PC-3 (cell line): ENCODE measurements at regions of chr12 and their contacts with region 1.

Region 1: DNA sequence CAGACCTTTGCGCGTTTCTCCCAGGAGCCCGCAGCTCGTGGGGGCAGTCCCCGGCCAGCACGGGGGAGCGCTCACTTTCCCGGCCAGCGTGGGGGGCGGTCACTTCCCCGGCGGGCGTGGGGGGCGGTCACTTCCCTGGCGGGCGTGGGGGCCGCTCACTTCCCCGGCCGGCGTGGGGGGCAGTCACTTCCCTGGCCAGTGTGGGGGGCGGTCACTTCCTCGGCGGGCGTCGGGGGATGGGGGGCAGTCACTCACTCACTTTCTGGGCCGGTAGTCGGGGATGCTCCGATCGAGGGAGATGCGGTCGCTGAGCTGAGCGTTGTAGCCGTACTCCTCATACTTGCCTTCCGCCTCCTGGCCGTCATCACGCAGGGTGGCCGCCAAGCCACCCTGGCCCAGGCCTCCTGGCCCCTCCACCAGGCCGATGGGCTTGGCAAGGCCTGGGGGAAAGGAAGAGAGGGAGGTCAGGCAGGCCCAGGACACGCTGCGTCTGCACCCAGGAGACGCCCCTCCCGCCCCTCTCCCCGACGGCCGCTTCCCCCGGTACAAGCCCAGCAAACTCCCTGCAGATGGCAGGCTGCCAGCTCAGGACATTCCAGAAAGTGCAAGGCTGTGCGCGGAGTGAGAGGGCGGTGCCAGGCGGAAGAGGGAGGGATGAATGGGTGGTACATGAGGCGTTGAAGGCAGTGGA is 43.3 kb downstream of the GALNT9 start:
- DNase-seq: peak; percentile 67
- ATAC-seq: no peak
- H3K4me3 ChIP-seq: no peak overlapping the region
- H3K27ac ChIP-seq: peak overlapping the region; percentile 70
- H3K4me1 ChIP-seq: peaks cover 58% of the 10 kb centered on the region
- H3K27me3 ChIP-seq: no peaks in the 10 kb centered on the region
- CTCF ChIP-seq: no peak

Region 2: DNA sequence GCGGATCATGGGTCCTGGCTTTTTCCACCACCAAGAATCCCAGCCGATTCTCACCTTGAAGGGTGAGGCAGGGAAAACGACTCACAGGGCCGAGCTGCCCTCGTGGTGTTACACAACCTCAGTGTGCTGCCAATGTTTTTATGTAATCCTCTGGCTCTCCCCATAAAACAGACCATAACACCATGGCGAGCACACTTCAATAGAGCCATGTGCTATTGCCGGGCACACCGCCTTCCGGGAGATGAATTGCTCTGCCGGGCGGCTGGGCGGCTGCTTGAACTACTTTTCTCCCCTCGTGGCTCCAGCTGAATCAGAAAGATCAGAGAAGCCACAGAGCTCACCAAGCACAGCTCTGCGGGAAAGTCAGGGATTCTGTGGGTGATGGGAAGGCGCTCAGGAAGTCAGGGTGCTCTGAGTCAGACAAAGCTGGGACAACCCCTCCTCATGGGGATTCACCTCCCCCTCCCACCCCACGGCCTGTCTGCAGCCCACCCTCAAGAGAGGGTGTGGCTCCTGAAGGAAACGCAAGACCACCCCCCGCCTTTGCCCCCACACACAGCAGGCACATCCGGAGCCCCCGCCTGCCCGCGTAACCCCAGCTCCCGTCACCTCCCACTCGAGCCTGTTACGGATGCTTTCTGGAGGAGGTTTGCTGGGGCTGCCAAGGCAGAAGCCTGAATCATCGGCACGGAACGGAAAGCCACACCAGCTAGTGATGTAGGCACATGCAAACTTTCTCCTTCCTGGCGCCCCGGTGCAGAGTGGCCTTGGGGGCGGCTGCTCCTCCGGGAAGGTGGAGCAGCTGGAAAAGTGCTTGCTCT is 41.4 kb after region 1 on chr12:
- CTCF ChIA-PET with region 1: interaction called, 4 read pairs
- POLR2A ChIA-PET with region 1: no interaction called
- intact Hi-C with region 1: loop called (anchors 5 kb)
- DNase-seq: peak; percentile 82
- ATAC-seq: peak; percentile 87
- H3K4me3 ChIP-seq: peak overlapping the region; percentile 57
- H3K27ac ChIP-seq: peak overlapping the region; percentile 66
- H3K4me1 ChIP-seq: peaks cover 19% of the 10 kb centered on the region
- H3K27me3 ChIP-seq: peaks cover 45% of the 10 kb centered on the region
- CTCF ChIP-seq: no peak

Region 3: DNA sequence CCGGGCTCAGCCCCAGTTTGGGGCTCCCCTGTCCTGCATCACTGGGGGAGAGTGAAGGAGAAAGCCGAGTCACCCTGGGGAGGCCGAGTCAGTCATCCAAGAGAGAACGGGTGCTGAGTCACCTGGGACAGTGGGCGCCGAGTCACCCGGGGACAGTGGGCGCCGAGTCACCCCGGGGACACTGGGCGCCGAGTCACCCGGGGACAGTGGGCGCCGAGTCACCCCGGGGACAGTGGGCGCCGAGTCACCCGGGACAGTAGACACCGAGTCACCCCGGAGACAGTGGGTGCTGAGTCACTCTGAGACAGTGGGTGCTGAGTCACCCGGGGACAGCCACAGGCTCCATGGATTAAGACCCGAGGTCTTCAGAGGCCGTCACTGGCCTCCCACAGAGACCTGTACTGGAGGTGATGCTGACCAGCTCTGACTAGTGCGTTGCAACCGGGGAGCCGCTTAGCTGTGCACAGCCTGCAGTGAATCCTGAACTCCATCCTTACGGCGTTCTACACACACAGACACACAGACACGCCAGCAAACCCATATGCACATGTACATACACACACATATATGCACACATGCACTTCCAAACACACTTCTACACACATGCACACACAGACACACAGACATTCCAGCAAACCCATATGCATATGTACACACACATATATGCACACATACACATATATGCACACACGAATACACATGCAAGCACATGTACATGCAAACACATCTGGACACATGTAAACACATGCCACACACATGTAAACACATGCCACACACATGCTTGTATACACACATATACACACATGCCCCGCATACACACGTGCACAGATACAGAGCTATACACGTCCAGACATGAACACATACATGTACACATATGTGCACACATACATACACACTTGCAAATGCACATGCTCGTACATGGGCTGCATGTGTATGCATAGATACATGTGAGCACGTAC is 108.1 kb after region 1 on chr12:
- CTCF ChIA-PET with region 1: interaction called, 3 read pairs
- POLR2A ChIA-PET with region 1: no interaction called
- intact Hi-C with region 1: loop called (anchors 10 kb)
- DNase-seq: peak; percentile 39
- ATAC-seq: peak; percentile 51
- H3K4me3 ChIP-seq: peak overlapping the region; percentile 29; the same call in 1 of the 2 replicates
- H3K27ac ChIP-seq: no peak overlapping the region
- H3K4me1 ChIP-seq: peaks cover 11% of the 10 kb centered on the region
- H3K27me3 ChIP-seq: peaks cover 52% of the 10 kb centered on the region
- CTCF ChIP-seq: no peak

Region 4: GRCh38 chr12:132572135-132572534 is 286.0 kb after region 1 on chr12:
- CTCF ChIA-PET with region 1: no interaction called
- POLR2A ChIA-PET with region 1: no interaction called
- intact Hi-C with region 1: no loop called
- DNase-seq: no peak
- ATAC-seq: no peak
- H3K4me3 ChIP-seq: no peak overlapping the region
- H3K27ac ChIP-seq: no peak overlapping the region
- H3K4me1 ChIP-seq: no peaks in the 10 kb centered on the region
- H3K27me3 ChIP-seq: no peaks in the 10 kb centered on the region
- CTCF ChIP-seq: no peak